GM13977 (cell line): ENCODE measurements at regions of chr16 and their contacts with region 1.

Region 1: DNA sequence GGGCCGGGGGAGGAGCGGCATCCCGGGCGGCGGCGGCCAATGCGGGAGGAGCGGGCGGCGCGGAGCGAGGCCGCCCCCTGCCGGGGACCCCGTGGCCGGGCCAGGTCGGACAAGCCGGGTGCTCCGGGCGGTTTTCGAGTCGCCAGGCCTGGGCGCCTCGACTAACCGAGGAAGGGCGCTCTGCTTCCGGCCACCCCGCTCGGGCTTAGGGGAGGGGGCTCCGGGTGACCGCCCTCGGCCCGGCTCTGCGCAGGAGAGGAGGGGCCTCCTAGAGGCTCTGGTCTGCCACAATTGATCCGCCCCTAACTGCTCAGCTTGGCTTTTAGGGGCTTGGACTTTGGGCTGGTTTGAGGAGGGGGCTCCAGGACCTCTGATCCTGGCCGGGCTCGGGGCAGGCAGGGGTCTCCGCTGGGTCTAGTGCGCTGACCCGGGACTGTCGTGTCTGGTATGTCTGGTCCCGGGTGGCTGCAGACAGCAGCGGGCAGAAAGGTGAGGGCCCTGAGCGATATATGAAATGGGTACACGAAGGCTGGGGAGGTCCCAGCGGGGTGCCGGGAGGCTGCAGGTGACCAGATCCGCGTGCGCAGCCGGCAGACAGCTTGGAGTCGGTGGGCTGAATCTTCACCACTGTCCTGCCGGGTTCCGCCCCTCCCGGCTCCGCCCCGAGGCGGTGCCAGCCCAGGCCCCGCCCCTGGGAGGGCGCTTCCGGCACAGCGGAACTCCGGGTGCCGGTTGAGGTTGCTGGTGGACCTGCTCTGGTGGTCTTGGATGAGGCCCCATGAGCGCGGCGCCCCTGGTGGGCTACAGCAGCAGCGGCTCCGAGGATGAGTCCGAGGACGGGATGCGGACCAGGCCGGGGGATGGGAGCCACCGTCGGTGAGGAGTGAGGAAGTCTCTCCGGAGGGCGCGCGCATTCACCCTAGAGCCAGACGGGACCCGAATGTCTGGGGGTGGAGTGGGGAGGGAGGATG is at the start of gene USB1:
- DNase-seq: peak; percentile 99
- CTCF ChIP-seq: peak; percentile 79

Region 2: GRCh38 chr16:57667526-57668258 is 333.3 kb before region 1 on chr16:
- in situ Hi-C with region 1: no loop called
- DNase-seq: no peak
- CTCF ChIP-seq: peak; percentile 32

Region 3: GRCh38 chr16:57882792-57883191 is 118.2 kb before region 1 on chr16:
- in situ Hi-C with region 1: no loop called
- DNase-seq: no peak
- CTCF ChIP-seq: no peak

Region 4: DNA sequence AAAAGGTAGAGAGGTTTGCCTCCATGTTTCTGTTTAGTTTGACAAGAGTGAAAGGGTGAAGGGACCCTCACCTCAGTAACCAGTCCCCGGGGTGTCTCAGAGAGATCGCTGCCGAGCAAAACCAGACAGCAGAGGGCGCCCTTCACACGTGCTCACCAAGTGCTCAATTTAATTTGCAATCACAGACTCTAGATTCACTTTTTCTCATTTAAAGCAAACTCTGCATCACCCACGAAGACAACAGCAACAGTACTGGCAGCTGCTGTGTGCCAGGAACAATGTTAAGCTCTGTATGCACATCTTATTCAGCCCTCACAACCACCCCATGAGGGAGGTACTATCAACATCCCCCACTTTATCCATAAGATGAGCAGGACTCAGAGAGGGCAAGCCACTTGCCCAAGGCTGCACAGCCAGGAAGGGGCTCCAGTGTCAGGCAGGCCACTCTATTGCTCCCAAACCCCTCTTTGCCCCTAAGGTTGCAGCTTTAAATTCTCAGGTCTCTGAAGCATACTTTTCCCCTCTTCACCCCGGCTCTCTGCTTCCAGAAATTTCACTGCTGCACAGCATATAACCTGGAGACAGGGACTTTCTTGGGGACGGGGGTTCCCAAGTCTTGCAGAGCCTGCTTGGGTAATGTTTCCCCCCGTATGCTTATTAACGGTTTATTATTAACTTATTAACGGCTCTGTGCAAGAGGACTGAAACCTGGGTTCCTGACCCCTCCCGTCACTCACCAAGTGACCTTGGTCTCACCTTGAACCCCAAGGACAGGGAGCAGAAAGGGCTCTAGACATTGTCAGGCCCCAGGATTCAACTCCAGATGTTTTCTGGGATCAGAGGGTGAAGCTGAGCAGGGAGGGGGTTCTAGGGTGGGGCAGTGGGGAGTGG is 101.0 kb before region 1 on chr16:
- in situ Hi-C with region 1: loop called (anchors 10 kb)
- DNase-seq: peak; percentile 79
- CTCF ChIP-seq: peak; percentile 86

Region 5: DNA sequence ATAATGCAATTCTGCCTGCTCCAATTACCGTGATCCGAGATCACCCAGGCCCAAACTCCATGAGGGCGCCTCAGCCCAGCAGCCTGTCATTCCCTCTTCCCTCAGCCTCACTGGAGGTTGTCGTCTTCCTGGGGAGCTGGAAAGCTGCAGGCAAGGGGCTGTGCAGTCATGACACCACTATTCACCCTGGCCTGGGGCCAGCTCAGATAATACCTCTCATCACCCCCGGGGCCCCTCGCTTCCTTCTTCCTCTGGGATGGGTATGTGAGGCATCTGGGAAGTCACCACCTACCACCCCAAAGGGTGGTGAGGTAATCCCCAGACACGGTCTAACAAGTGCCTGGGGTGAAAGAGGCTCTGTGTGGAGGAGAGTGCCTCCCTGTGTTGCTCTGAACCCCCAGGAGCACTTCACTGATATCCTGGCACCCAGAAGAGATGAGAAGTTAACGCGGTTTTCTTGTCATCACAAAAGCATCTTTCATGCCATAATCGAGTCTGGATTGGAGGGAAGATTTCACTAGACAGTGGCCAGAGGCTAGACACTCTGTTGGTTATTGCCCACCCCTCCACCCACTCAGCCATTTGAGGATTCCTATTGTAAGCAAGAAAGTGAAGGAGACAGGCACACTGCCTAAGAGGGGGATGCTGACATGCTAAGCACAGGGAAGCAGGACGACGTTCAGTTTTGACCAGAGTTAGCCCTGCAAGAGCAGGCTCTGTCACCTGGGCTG is 109.7 kb after region 1 on chr16:
- in situ Hi-C with region 1: no loop called
- DNase-seq: no peak
- CTCF ChIP-seq: no peak

Region 6: GRCh38 chr16:58306327-58306726 is 305.3 kb after region 1 on chr16:
- in situ Hi-C with region 1: loop called (anchors 25 kb)
- DNase-seq: no peak
- CTCF ChIP-seq: peak; percentile 71

Region 7: GRCh38 chr16:58392215-58393137 is 391.5 kb after region 1 on chr16 and contains the start of gene GINS3:
- in situ Hi-C with region 1: no loop called
- DNase-seq: peak; percentile 92
- CTCF ChIP-seq: no peak